MCF 10A (cell line): ENCODE measurements at regions of chr6 and their contacts with region 1.

Region 1: GRCh38 chr6:32113386-32114352 is 4.5 kb upstream of the TNXB start:
- DNase-seq: peak; percentile 67
- H3K4me3 Mint-ChIP-seq: no peak overlapping the region
- H3K27ac Mint-ChIP-seq: peak overlapping the region; percentile 17
- H3K4me1 Mint-ChIP-seq: peaks cover 33% of the 10 kb centered on the region
- H3K27me3 Mint-ChIP-seq: peaks cover 17% of the 10 kb centered on the region
- CTCF ChIP-seq: peak; percentile 23

Region 2: DNA sequence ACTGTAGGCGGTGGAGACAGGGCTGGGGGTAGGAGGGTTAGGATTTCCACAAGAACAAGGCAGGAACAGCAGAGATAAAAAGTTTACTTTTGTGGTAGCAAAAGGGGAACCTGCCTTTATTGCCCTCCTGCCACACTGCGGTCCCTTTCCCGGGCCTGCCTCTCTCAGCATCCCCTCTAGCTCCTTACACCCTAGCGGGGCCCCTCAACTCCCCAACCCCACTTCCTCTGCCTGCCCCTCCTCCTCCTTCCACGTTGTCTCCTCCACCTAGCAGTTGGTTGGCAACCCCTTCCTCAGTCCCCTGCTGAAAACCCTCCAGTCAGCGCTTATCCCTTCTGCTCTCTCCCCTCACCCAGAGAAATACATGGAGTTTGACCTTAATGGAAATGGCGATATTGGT is 497.9 kb before region 1 on chr6:
- CTCF ChIA-PET with region 1: no interaction called
- POLR2A ChIA-PET with region 1: no interaction called
- intact Hi-C with region 1: no loop called
- DNase-seq: no peak
- H3K4me3 Mint-ChIP-seq: no peak overlapping the region
- H3K27ac Mint-ChIP-seq: no peak overlapping the region
- H3K4me1 Mint-ChIP-seq: no peaks in the 10 kb centered on the region
- H3K27me3 Mint-ChIP-seq: no peaks in the 10 kb centered on the region
- CTCF ChIP-seq: no peak

Region 3: DNA sequence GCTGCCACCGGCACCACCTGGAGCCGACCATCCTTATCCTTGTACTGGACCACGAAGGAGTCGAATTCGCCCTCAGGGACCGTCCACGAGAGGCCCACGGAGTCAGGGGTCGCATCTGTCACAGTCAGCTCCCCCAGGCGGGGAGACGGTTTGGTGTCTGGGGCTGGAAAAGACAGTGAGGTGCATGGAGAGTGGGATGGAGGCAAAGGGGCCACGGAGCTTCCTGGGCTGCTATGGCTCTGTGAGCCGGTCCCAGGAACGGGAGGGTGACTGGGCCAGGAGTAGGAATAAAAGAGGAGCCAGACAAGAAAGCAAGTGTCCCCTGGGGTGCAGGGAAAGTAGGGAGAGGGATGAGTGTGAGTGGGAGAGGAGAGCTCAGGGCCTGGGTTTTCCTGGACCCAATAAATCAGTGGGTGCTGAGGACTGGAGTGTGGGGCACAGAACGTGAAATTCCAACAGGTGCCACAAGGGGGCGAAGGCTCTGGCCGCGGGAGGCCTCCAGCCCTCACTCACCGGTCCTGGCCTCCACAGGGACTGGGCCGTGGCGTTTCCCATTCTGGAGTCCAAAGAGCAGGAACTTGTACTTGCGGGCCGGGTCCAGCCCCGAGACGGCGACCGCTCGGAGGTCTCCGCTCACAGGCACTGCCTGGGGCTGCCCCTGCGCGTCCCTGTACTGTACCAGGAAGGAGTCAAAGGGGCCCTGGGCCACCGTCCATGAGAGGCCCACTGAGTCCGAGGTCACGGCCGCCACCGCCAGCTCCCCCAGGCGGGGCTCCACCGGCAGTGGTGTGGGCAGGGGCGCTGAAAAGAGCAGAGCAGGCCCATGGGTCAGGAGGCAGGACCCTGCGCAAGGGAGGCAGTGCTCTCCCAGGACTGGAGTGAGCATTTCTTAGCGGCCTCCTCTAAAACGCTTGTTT is 65.6 kb before region 1 on chr6:
- CTCF ChIA-PET with region 1: interaction called, 12 read pairs
- POLR2A ChIA-PET with region 1: no interaction called
- intact Hi-C with region 1: loop called (anchors 2 kb)
- DNase-seq: peak; percentile 61
- H3K4me3 Mint-ChIP-seq: no peak overlapping the region
- H3K27ac Mint-ChIP-seq: no peak overlapping the region
- H3K4me1 Mint-ChIP-seq: peaks cover 10% of the 10 kb centered on the region
- H3K27me3 Mint-ChIP-seq: no peaks in the 10 kb centered on the region
- CTCF ChIP-seq: peak; percentile 84